ENCODE measurements at regions of chr16 and their contacts with region 1.

Region 1: GRCh38 chr16:66315210-66315825 is 51.2 kb upstream of the CDH5 start:
- DNase-seq: peak; percentile 87
- H3K4me3 ChIP-seq: no peak overlapping the region
- H3K27ac ChIP-seq: no peak overlapping the region
- H3K4me1 ChIP-seq: peaks cover 6% of the 10 kb centered on the region
- H3K27me3 ChIP-seq: no peaks in the 10 kb centered on the region
- CTCF ChIP-seq: peak; percentile 99

Region 2: DNA sequence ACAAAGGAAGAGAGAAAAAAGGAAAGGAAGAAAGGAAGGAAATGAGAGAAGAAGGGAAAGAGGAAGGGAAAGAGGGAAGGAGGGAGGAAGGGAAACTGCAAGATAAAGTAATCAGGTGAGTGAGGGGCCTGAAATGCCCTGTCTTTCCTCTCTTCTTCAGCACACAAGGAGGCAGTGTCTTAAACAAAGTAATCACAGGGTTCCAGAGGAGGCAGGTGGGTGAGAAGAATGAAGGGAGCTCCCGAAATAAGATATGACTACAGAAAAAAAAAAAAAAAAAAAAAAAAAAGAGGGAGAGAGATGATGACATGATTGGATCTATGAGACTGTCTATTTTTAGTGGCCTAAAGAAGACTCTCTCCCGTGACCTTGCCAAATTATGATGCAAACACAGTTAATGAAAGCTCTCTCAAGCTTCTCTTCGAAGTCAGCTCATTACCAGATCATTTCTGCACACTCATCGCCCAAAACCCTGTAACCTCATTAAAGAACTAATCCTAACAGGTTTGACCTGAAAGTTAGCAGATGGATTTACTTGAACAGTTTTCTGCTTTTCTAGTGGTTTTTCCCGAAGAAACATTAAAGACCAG is 1247.1 kb before region 1 on chr16:
- CTCF ChIA-PET with region 1: interaction called, 11 read pairs
- POLR2A ChIA-PET with region 1: no interaction called
- intact Hi-C with region 1: no loop called
- DNase-seq: peak; percentile 48
- H3K4me3 ChIP-seq: no peak overlapping the region
- H3K27ac ChIP-seq: peak overlapping the region; percentile 39
- H3K4me1 ChIP-seq: peaks cover 44% of the 10 kb centered on the region
- H3K27me3 ChIP-seq: no peaks in the 10 kb centered on the region
- CTCF ChIP-seq: no peak

Region 3: DNA sequence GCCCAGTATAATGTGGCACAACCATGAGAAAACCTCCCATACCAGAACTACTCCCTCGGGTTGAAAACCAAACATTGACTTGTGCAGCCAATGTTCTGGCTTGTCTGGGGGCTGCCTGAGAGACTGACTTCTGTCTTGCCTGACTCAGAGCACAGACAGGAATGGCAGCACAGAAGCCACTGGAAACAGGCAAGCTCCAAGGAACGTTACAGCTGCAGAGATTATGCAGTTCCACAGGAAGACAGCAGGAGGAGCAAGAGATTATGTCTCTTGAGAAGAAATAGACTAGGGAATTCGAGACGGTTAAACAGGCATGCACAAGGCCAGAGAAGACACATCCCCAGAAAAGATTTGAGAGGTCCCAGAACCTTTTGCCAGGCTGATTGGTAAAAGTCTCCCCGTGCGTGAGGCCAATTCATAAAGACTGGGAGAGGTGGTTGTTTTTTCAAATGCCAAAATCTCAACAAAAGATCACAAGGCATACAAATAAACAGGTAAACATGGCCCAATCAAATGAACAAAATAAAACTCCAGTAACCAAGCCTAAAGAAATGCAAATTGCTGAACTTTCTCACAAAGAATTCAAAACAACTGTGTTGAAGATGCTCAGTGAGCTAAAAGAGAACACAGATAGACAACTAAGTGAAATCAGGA is 39.4 kb before region 1 on chr16:
- CTCF ChIA-PET with region 1: interaction called, 6 read pairs
- POLR2A ChIA-PET with region 1: no interaction called
- intact Hi-C with region 1: loop called (anchors 1 kb)
- DNase-seq: peak; percentile 83
- H3K4me3 ChIP-seq: no peak overlapping the region
- H3K27ac ChIP-seq: no peak overlapping the region
- H3K4me1 ChIP-seq: peaks cover 12% of the 10 kb centered on the region
- H3K27me3 ChIP-seq: no peaks in the 10 kb centered on the region
- CTCF ChIP-seq: peak; percentile 80